ENCODE measurements at regions of chr4 and their contacts with region 1.

Region 1: GRCh38 chr4:99088481-99089365 is at the start of gene ADH5:
- DNase-seq: peak; percentile 65 to 66
- H3K4me3 ChIP-seq: peak within 1 kb of the TSS; percentile 99
- H3K27ac ChIP-seq: peak within 1 kb of the TSS; percentile 71
- H3K4me1 ChIP-seq: peaks cover 17% of the 10 kb centered on the region
- H3K27me3 ChIP-seq: no peaks in the 10 kb centered on the region
- CTCF ChIP-seq: no peak
- total RNA-seq, gene ADH5: 76.9 and 94.7 TPM in 2 replicates

Region 2: GRCh38 chr4:99024481-99025275 is 64.0 kb before region 1 on chr4:
- CTCF ChIA-PET with region 1: no interaction called
- POLR2A ChIA-PET with region 1: no interaction called
- intact Hi-C with region 1: no loop called
- DNase-seq: no peak
- H3K4me3 ChIP-seq: no peak overlapping the region
- H3K27ac ChIP-seq: no peak overlapping the region
- H3K4me1 ChIP-seq: no peaks in the 10 kb centered on the region
- H3K27me3 ChIP-seq: no peaks in the 10 kb centered on the region
- CTCF ChIP-seq: no peak

Region 3: DNA sequence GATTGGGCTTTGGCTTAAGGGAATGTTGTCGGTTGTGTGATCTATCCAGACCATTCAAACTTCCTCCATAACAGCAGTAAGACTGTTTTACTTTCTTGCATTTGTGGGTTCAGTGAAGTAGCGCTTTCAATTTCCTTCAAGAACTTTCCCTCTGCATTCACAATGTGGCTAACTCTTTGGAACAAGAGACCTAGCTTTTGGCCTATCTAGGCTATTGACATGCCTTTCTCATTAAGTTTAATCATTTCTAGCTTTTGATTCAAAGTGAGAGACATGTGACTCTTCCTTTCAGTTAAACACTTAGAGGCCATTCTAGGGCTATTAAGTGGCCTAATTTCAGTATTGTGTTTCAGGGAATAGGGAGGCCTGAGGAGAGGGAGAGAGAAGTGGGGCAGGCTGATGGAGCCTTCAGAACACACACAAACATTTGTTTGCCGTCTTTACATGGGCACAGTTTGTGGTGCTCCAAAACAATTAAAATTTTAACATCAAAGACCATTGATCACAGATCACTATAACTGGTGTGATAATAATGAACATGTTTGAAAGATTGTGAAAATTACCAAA is 34.2 kb before region 1 on chr4:
- CTCF ChIA-PET with region 1: no interaction called
- POLR2A ChIA-PET with region 1: no interaction called
- intact Hi-C with region 1: no loop called
- DNase-seq: no peak
- H3K4me3 ChIP-seq: no peak overlapping the region
- H3K27ac ChIP-seq: no peak overlapping the region
- H3K4me1 ChIP-seq: peaks cover 9% of the 10 kb centered on the region
- H3K27me3 ChIP-seq: no peaks in the 10 kb centered on the region
- CTCF ChIP-seq: no peak

Region 4: GRCh38 chr4:99074816-99075215 is 13.9 kb before region 1 on chr4:
- CTCF ChIA-PET with region 1: no interaction called
- POLR2A ChIA-PET with region 1: interaction called, 10 read pairs
- intact Hi-C with region 1: no loop called
- DNase-seq: no peak
- H3K4me3 ChIP-seq: no peak overlapping the region
- H3K27ac ChIP-seq: no peak overlapping the region
- H3K4me1 ChIP-seq: no peaks in the 10 kb centered on the region
- H3K27me3 ChIP-seq: no peaks in the 10 kb centered on the region
- CTCF ChIP-seq: no peak

Measured in PC-9 (cell line).